Cardiac septum (tissue), 1 donor: ENCODE measurements at regions of chr3 and their contacts with region 1.

Region 1: DNA sequence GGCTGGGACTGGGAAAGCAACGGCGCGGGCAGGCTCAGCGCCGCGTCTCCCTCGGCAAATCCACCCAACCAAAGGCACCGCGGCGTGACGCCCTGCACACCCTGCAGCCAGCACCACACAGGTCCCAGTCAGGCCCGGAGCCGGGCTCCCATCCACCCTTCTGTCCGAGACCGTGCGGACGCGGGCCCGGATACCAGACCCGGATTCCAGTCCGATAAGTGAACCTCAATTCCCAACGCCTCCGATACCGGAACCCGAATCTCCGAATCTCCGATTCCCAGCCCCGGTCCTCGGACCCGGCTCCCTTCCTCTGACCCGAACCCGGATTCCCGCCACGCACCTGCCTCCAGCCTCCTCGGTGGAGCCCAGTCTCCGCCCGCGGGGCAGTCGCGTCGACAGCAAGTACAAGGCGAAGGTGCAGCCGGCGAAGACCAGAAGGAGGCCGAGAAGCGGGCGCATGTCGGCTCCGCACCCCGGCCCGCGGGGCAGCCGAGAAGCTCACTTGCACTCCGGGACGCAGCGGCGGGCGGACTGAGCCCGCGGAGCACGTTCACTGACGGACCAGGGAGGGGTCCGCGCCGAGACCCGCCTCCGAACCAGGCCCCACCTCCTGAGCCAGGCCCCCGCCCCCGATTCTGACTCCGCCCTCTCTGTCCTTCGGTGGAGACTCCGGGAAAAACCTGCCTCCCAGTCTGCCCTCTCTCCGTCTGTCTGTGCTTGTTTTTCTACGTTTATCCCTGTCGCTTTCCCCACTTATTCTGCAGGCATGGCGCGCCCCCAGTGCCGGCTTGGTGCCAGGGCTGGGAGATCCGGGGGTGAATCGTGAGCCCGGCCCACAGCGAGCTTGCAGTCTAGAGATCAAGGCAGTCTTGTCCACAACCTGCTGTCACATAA is at the start of gene TMEM41A:
- DNase-seq: peak; percentile 97
- total RNA-seq, gene TMEM41A: 8.0 TPM

Region 2: DNA sequence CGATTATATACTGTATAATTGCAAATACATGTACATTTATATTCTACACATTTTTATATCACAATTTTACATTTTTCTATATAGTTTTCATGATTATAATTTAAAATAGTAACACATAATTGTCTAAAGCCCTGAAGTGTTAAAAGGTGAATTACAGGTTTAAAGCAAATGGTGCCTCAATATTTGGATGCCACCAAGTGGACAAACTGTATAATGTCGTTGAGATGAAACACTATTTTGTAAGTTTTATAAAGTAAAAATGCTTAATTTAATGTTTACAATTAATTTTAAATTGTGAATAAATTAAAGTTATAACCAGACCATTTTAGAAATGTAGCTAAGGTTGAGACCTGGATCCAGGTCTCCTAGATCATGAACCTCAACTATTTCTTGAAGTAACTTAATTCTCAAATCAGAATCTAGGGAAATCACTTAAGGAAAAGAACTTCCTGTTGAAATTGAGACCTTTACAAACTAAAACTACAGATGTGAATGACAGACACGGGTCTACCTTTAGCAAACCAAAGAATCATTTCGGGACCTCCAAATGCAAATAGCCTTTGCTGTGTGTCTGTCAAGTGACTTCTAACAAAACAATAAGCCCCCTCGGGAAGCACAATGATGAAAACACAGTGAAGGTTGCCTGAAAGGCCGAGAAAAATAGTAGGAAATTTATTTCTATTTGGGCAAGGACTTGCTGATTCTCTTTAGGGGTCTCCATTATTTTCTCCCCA is 282.7 kb before region 1 on chr3:
- intact Hi-C with region 1: no loop called
- DNase-seq: no peak

Region 3: DNA sequence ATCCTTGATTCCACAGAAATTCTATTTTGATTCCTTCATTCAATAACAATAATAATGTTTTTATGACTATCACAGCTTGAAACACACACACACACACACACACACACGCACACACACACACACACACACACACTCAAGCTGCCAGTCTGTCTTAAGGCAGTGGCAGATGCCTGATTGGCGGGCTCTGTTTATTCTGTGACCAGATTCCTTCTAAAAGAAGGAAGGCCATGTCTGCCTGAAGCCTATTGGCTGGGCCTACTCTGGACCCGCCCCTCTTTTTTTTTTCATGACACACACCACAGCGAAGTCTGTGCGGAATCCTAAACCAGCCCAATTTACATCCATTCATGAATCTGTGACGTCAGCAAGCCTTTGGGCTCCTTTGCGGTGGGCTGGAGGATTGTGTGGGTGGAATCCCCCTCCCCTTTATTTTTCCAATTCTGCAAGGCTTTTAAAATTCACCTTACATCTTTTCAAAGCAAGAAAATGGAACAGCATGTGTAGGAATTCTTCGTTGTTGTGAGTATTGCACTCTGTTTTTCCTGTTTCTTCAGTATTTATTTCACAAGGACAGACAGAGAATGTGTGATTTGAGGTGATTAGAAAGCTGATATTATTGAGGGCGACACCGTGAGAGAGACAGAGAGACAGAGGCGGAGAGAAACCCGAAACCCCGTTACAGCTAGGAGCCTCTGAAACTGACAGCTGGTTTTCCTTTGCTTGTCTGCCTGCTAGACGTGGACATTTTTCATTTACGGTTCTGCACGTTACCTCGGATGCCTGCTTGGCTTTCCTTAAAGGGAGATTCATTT is 135.7 kb before region 1 on chr3 and contains the start of gene MAP3K13:
- intact Hi-C with region 1: loop called (anchors 5 kb)
- DNase-seq: peak; percentile 86
- total RNA-seq, gene MAP3K13: 9.0 TPM

Region 4: DNA sequence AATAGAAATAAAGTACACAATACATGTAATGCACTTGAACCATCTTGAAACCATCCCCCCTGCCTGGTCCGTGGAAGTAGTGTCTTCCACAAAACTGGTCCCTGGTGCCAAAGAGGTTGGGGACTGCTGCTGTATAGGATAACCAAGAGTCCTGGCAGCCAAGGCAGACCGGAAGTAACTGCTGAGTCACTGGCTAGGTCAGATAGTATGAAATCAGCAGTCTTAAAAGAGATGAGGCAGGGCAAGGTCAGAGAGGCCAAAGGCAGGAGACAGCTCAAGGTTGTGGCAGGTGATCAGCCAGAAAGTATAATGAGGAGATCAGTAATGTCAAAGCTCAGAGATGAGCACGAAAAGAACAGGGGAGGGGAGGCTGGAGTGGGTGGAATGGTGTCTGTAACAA is 75.6 kb before region 1 on chr3:
- intact Hi-C with region 1: no loop called
- DNase-seq: no peak

Region 5: DNA sequence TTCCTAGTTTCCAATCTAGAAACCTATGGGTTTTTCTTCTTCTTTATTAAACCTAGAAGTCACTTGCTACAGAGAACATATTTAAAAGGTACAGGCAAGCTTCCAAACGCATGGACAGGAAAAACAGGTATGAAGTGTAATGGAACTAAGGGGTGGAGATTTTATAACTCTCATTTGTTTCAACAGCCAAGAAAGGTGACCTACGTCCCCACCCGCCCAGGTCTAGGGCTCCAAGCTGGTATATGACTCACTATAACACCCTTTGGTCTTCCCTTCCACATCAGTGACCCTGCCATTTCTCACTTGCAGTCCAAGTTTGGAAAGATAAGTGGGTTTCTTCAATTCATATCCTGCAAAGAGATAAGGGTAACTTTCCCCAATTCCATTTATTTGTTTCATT is 59.6 kb after region 1 on chr3:
- intact Hi-C with region 1: loop called (anchors 5 kb)
- DNase-seq: peak; percentile 4

Region 6: GRCh38 chr3:185585859-185586685 is 87.3 kb after region 1 on chr3 and contains the start of gene SENP2:
- intact Hi-C with region 1: loop called (anchors 2 kb)
- DNase-seq: peak; percentile 100
- total RNA-seq, gene SENP2: 36.7 TPM